ENCODE measurements at regions of chr3 and their contacts with region 1.

Region 1: GRCh38 chr3:127822698-127823425 is 547 bp upstream of the MGLL start:
- DNase-seq: no peak
- H3K4me3 ChIP-seq: peak overlapping the region; percentile 74 to 78 (median 78)
- H3K27ac ChIP-seq: peak overlapping the region; percentile 83 to 86
- H3K4me1 ChIP-seq: peaks cover 0 to 19% of the 10 kb centered on the region in 2 donors
- H3K27me3 ChIP-seq: no peaks in the 10 kb centered on the region
- CTCF ChIP-seq: peak in 1 of 3 donors; percentile 24
- POLR2A ChIP-seq: no peak

Region 2: DNA sequence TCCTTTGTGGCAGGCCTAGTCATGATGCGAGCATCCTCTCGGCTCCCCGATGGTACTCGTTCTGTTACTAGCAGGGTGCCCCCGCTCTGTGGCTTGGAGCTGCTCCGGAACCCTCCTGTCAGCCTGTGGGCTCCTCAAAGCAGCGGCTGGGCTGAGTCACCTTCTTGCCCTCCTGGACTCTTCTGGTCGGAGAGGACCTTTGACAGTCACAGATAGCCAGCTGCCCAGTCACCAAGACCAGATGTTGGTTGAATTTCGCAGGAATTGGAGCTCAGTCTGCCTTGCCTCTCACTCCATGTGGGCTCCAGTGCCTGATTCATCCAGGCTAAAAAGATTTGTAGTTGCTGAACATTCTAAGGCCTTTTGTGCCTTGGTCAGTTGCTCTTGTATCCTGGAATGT is 1024.3 kb before region 1 on chr3:
- intact Hi-C with region 1: no loop called
- DNase-seq: no peak
- H3K4me3 ChIP-seq: no peak overlapping the region
- H3K27ac ChIP-seq: no peak overlapping the region
- H3K4me1 ChIP-seq: no peaks in the 10 kb centered on the region
- H3K27me3 ChIP-seq: no peaks in the 10 kb centered on the region
- CTCF ChIP-seq: no peak
- POLR2A ChIP-seq: no peak

Region 3: GRCh38 chr3:127690823-127691452 is 131.9 kb before region 1 on chr3:
- intact Hi-C with region 1: loop called (anchors 5 kb)
- DNase-seq: no peak
- H3K4me3 ChIP-seq: no peak overlapping the region
- H3K27ac ChIP-seq: peak overlapping the region; percentile 16 to 43
- H3K4me1 ChIP-seq: no peaks in the 10 kb centered on the region
- H3K27me3 ChIP-seq: no peaks in the 10 kb centered on the region
- CTCF ChIP-seq: peak in 1 of 3 donors; percentile 21
- POLR2A ChIP-seq: no peak

Region 4: DNA sequence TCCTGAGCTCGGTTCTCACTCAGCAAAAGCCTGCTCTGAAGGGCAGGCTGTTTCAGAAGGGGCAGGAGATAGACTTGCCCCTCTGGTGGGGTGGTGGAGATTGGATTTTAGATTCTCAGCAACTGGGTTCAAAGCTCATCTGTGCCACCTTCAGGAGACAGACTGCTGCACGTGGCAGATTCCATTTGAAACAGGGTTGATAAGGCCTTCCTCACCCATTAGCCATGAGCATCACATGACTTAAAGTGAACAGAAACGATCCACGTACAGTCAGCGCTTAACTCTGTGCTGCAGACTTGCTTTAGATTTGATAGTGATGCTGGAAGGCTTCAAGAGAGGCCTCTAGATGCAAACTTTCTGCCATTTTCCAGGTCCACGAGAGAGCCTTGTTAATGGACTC is 34.5 kb after region 1 on chr3:
- intact Hi-C with region 1: no loop called
- DNase-seq: no peak
- H3K4me3 ChIP-seq: no peak overlapping the region
- H3K27ac ChIP-seq: no peak overlapping the region
- H3K4me1 ChIP-seq: no peaks in the 10 kb centered on the region
- H3K27me3 ChIP-seq: no peaks in the 10 kb centered on the region
- CTCF ChIP-seq: no peak
- POLR2A ChIP-seq: no peak

Region 5: DNA sequence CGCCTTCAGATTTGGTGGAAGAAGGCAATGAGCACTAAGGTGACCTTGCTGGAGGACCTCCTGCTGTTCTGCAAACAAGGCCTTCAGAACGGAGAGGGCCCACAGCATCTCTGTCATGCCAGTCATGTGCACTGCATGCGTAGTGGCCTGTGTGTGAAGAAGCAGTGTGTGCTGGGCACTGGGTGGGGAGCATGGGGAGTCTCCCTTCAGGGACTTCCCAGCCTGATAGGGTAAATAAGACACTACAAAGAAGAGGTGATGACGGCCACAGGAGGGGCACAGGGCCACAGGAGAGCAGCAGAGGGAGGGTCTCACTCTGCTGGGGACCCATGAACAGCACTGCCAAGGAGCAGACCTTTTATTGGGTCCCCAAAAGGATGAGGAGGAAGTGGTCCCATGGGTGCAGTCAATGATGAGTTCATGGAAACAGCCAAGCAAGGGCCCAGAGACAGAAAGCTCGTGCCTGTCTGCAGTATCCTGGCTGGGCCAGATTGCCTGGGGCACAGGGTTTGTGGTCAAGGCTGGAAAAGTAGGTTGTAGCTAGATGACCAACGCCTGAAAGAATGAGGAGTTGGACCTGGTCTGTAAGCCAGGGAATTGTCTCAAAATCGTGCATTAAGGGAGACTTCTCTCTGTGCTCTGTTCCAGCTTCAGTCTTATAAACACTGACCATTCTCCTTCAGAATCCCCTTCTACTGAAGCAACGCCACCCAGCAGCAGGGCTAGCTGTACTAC is 161.5 kb after region 1 on chr3:
- intact Hi-C with region 1: no loop called
- DNase-seq: peak in 1 of 2 donors; percentile 36
- H3K4me3 ChIP-seq: no peak overlapping the region
- H3K27ac ChIP-seq: no peak overlapping the region
- H3K4me1 ChIP-seq: no peaks in the 10 kb centered on the region
- H3K27me3 ChIP-seq: no peaks in the 10 kb centered on the region
- CTCF ChIP-seq: no peak
- POLR2A ChIP-seq: no peak